ENCODE measurements at regions of chrX and their contacts with region 1.

Region 1: DNA sequence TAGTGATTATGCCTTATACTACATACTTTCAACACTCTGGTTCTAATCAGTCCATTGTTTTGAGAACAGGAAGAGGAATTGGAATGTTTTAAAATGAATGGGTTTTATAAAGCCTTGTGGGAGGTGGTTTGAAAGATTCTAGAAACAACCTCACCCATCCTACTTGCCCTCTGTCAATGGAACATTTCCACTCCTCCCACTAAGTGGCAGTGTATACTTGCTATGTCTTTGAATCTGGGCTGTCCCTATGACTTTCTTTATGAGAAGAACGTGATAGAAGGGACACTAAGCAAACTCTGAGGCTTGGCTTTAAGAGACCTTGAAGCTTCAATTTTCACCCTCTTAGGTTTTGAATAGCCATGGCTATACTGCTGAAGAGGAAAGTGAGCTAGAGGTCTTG is 611.2 kb downstream of the PPP4R3C start:
- DNase-seq: no peak

Region 2: DNA sequence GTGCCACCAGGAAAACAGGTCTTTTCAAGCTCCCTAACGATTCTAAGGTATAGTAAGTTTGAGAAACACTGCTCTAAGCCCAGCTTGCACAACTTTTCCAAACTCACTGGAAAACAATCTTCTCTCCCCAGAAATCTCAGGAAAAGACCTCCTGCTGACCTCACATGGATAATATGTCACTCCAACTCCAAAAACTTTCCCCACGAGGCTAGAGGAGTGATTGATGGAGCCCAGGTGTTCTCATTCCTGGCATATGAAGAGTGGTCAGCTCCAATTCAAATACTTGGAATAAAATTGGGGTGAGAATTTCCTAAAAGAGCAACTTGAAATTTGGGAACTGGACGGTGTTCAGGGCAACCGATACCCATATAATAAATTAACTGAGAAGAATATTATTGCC is 311.3 kb after region 1 on chrX:
- intact Hi-C with region 1: no loop called
- DNase-seq: no peak

Region 3: GRCh38 chrX:27186664-27187063 is 334.7 kb after region 1 on chrX:
- intact Hi-C with region 1: loop called (anchors 5 kb)
- DNase-seq: no peak